Dorsolateral prefrontal cortex (tissue), 120 donors: ENCODE measurements at regions of chr15 and their contacts with region 1.

Region 1: GRCh38 chr15:70488002-70488605 is 275.3 kb downstream of the UACA start:
- DNase-seq: peak; percentile 51 to 85 (median 72)
- H3K4me3 ChIP-seq: no peak overlapping the region
- H3K27ac ChIP-seq: no peak overlapping the region
- H3K27me3 ChIP-seq: no peaks in the 10 kb centered on the region
- CTCF ChIP-seq: peak; percentile 80 to 99 (median 95)

Region 2: DNA sequence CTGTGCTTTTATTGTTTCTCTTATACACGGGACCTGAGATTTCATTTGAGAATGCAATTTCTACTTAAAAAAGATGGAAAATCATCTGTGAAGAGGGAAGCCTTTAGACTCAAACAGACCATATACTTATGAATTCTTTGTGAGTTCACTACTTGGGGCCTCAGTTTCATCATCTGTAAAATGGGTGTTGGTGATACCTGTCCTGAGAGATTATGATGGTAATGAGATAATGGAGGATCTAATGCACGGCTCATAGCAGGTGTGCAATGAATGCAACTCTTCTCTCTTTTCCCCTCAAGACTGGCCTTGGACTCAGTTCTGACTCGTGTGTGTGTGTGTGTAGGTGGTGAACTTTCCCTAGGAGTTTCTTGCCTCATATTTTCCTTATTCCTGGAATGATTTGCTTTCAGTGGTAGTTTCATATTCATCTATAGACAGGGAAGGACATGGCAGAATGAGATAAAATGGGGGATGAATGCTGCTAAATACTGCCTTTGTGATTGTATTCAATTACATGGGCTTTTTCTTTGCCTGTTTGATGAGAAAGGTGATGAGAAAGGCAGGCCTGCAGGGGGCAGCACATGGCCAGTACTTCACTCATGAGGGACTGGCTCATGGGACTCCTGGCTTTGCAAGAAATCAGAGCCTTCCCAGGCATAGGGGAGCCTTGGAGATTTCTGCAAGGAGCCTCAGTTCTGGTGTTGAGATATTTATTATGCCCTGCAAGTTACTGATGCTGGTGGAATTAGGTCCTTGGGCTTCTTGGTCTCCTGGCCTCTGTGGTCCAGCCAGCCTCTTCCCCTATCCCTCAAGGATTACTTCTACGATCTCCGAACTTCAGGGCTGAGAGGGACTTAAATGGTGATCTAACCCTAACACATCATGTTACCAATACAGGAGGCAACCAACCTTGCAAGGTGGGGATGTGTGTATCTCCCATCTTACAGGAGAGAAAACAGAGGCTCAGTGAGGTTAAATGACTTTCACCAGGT is 964.8 kb before region 1 on chr15:
- intact Hi-C with region 1: loop called in 1 of 2 experiments (anchors 5 kb)
- DNase-seq: peak; percentile 59 to 93 (median 83)
- H3K4me3 ChIP-seq: no peak overlapping the region
- H3K27ac ChIP-seq: peak overlapping the region in 6 of 59 donors; percentile 6 to 59 (median 50)
- H3K27me3 ChIP-seq: peaks cover 0 to 4% (median 0%) of the 10 kb centered on the region in 45 donors
- CTCF ChIP-seq: peak; percentile 57 to 91 (median 82)

Region 3: GRCh38 chr15:69576035-69576526 is 912.0 kb before region 1 on chr15:
- intact Hi-C with region 1: loop called (anchors 5 to 10 kb)
- DNase-seq: peak; percentile 19 to 80 (median 60)
- H3K4me3 ChIP-seq: no peak overlapping the region
- H3K27ac ChIP-seq: no peak overlapping the region
- H3K27me3 ChIP-seq: peaks cover 0 to 9% (median 0%) of the 10 kb centered on the region in 45 donors
- CTCF ChIP-seq: peak; percentile 19 to 90 (median 76)